ENCODE measurements at regions of chr17 and their contacts with region 1.

Region 1: GRCh38 chr17:40772101-40772500 is at the start of gene KRT26:
- DNase-seq: no peak
- H3K4me3 ChIP-seq: no peak within 1 kb of the TSS
- H3K27ac ChIP-seq: no peak within 1 kb of the TSS
- H3K4me1 ChIP-seq: no peaks in the 10 kb centered on the region
- H3K27me3 ChIP-seq: no peaks in the 10 kb centered on the region
- CTCF ChIP-seq: no peak
- total RNA-seq, gene KRT26: not detected in 2 replicates

Region 2: GRCh38 chr17:40177275-40177874 is 594.7 kb before region 1 on chr17 and contains the start of gene RAPGEFL1:
- CTCF ChIA-PET with region 1: no interaction called
- POLR2A ChIA-PET with region 1: no interaction called
- intact Hi-C with region 1: no loop called
- DNase-seq: peak; percentile 41 to 64
- H3K4me3 ChIP-seq: peak within 1 kb of the TSS; percentile 81; the same call in 1 of the 2 replicates
- H3K27ac ChIP-seq: no peak within 1 kb of the TSS
- H3K4me1 ChIP-seq: peaks cover 62% of the 10 kb centered on the region
- H3K27me3 ChIP-seq: no peaks in the 10 kb centered on the region
- CTCF ChIP-seq: no peak
- total RNA-seq, gene RAPGEFL1: 14.0 and 14.9 TPM in 2 replicates

Region 3: DNA sequence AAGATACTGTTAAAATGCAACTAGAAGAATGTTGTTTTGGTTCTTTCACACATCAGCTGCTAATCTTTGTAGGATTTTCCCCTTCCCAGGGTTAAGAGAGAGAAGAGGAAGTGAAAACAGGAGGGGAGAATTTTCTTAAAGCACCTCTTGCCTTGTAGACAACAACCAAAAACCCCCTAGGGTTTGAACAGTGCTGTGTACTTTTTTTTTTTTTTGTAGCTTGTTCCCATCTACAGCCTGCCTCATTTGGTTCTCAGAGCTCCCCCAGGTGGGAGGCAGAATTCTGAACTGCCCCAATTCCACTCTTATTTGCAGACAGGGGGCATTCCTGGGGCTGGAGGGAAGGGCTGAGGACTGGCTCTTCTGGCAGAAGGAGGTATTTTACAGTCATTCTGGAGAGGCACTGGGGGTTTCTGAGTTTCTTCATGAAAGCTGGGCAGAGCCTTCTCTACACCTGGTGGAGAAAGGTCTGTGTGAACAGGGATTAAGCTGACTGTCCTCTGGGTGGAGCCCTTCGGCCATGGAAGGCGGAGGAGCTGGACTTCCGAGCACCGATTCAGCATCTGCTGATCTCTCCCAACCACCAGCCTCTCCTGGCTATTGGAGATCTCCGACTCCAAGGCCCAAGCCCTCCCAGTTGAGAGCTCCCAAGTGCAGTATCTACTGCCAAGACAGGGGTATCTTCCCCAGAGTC is 156.7 kb before region 1 on chr17:
- CTCF ChIA-PET with region 1: interaction called, 11 read pairs
- POLR2A ChIA-PET with region 1: no interaction called
- intact Hi-C with region 1: no loop called
- DNase-seq: peak; percentile 72
- H3K4me3 ChIP-seq: no peak overlapping the region
- H3K27ac ChIP-seq: no peak overlapping the region
- H3K4me1 ChIP-seq: peaks cover 10% of the 10 kb centered on the region
- H3K27me3 ChIP-seq: no peaks in the 10 kb centered on the region
- CTCF ChIP-seq: peak; percentile 73

Region 4: GRCh38 chr17:40753804-40754203 is 18.3 kb before region 1 on chr17:
- CTCF ChIA-PET with region 1: no interaction called
- POLR2A ChIA-PET with region 1: no interaction called
- intact Hi-C with region 1: no loop called
- DNase-seq: no peak
- H3K4me3 ChIP-seq: no peak overlapping the region
- H3K27ac ChIP-seq: no peak overlapping the region
- H3K4me1 ChIP-seq: no peaks in the 10 kb centered on the region
- H3K27me3 ChIP-seq: 0 out of 2 replicates have a peak, but pooled peaks cover 2% of the 10 kb centered on the region
- CTCF ChIP-seq: no peak

Region 5: GRCh38 chr17:40909351-40909750 is 137.2 kb after region 1 on chr17:
- CTCF ChIA-PET with region 1: no interaction called
- POLR2A ChIA-PET with region 1: no interaction called
- intact Hi-C with region 1: no loop called
- DNase-seq: peak; percentile 79 to 92
- H3K4me3 ChIP-seq: 0 out of 2 replicates have a peak overlapping the region, but pooled peaks have one; percentile 16
- H3K27ac ChIP-seq: peak overlapping the region; percentile 95
- H3K4me1 ChIP-seq: peaks cover 66% of the 10 kb centered on the region
- H3K27me3 ChIP-seq: no peaks in the 10 kb centered on the region
- CTCF ChIP-seq: peak; percentile 86